PC-9 (cell line): ENCODE measurements at regions of chr6 and their contacts with region 1.

Region 1: GRCh38 chr6:143607974-143608373 is 69.8 kb upstream of the PHACTR2 start:
- DNase-seq: no peak
- H3K4me3 ChIP-seq: no peak overlapping the region
- H3K27ac ChIP-seq: no peak overlapping the region
- H3K4me1 ChIP-seq: no peaks in the 10 kb centered on the region
- H3K27me3 ChIP-seq: no peaks in the 10 kb centered on the region
- CTCF ChIP-seq: no peak

Region 2: DNA sequence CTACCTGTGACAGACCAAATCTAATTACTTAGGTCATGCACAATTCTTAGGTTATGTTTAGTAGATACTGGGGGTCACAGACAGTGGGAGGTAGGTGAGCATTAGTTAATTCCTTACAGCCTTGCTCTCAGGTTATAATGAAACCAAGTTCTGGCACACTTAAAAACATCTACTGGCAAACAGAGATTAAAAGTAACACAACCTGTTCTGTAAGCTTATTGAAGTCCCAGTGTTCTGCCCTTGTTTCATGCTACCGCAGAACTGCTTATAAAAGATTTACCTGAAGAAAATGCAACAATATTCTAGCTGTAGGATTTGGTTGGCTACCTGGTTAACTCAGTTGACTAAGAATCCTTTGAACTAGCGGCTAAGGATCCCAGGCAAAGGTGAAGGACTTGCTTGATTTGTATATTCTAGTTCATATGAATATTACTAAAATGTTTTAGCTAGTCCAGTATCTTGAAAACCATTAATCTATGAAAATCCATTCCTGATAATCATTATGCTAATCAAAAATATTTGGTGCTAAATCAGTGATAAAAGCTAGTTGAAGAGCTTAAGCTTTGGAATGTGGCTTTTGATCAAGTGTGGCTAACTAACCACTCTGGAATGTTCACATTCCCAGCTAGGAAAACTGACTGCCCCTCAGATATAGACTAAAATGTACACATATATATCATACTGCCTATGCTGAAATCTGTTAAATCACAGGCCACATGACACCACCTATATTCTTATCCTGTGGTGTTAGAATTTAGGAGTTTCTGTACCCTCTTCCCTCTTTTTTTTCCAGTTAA is 150.2 kb before region 1 on chr6:
- CTCF ChIA-PET with region 1: no interaction called
- POLR2A ChIA-PET with region 1: no interaction called
- intact Hi-C with region 1: no loop called
- DNase-seq: peak in 1 of 2 experiments; percentile 69
- H3K4me3 ChIP-seq: peak overlapping the region; percentile 3; the same call in 1 of the 2 replicates
- H3K27ac ChIP-seq: peak overlapping the region; percentile 28
- H3K4me1 ChIP-seq: peaks cover 19% of the 10 kb centered on the region
- H3K27me3 ChIP-seq: no peaks in the 10 kb centered on the region
- CTCF ChIP-seq: no peak

Region 3: DNA sequence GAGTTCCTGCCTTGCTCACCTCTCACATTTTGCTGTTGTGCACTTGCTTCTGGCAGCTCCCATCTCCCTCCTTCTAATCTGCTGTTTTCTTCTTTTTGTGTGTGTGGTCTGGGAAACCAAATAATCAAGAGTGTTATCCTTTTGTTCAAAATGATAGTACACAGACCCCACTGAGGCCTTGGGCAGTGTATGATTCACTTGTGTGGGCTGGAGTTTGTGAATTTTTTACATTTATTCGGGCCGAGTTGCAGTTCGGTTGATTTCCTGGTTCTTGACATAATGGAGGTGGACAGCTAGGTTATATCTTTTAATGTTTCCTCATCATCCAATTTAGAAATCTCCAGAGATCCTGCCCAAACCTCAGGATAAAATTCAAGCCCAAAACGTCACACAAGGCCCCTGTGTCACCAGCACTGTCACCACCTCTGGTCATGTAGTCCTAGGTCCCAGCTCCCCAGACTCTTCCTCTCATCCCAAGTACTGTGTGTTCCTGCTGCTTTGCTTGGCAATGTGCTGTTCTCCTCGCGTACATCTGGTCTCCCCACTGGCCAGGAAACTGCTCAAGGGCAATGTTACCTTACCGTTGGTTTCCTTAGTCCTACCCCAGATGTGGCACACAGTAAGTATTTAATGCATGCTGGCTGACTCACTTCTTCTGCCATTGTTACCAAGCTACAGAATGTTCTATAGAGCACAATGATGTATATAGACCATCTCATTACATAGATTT is 14.1 kb after region 1 on chr6:
- CTCF ChIA-PET with region 1: no interaction called
- POLR2A ChIA-PET with region 1: interaction called, 10 read pairs
- intact Hi-C with region 1: no loop called
- DNase-seq: no peak
- H3K4me3 ChIP-seq: no peak overlapping the region
- H3K27ac ChIP-seq: no peak overlapping the region
- H3K4me1 ChIP-seq: no peaks in the 10 kb centered on the region
- H3K27me3 ChIP-seq: no peaks in the 10 kb centered on the region
- CTCF ChIP-seq: no peak

Region 4: DNA sequence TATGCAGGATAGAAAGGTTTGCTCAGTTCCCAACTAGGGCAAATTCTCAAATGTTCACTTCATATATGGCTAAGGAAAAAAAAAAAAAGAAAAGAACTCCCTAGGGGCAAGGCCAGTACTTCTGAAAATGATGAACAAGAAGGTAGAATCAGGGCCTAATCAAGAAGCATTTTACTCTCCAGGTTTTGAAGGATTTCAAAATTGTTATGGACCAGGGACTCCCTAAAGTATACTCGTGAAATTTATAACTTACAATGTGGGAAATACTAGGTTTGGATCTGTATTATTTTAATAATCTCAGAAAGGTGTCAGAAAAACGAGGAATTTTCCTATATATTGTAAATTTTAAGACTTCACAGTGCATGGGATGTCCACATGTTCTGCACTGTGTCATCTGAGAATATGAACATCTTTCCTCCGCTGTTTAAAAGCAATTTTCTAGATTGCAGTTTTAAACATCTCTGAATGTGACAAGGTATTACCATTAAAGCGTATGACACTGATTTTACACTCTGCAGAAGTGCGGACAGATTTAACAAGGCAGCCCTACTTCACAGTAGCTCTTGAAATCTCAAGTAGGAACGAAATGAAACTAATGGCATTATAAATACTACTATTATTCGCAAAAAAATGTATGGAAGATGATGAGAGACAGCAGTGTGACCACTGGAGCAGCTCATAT is 386.1 kb after region 1 on chr6:
- CTCF ChIA-PET with region 1: no interaction called
- POLR2A ChIA-PET with region 1: interaction called, 11 read pairs
- intact Hi-C with region 1: no loop called
- DNase-seq: no peak
- H3K4me3 ChIP-seq: no peak overlapping the region
- H3K27ac ChIP-seq: no peak overlapping the region
- H3K4me1 ChIP-seq: no peaks in the 10 kb centered on the region
- H3K27me3 ChIP-seq: no peaks in the 10 kb centered on the region
- CTCF ChIP-seq: no peak